H1 (cell line): ENCODE measurements at regions of chr1 and their contacts with region 1.

Region 1: GRCh38 chr1:47769295-47769694 is 227.9 kb downstream of the TRABD2B start:
- DNase-seq: no peak
- H3K4me3 ChIP-seq: no peak overlapping the region
- H3K27ac ChIP-seq: no peak overlapping the region
- H3K4me1 ChIP-seq: 0 out of 7 replicates have a peak, but pooled peaks cover 0 to 3% (median 0%) of the 10 kb centered on the region in 4 experiments
- H3K27me3 ChIP-seq: no peaks in the 10 kb centered on the region; a peak in 1 of 7 replicates
- CTCF ChIP-seq: no peak
- EP300 ChIP-seq: no peak
- POLR2A ChIP-seq: no peak
- RAD21 ChIP-seq: no peak

Region 2: DNA sequence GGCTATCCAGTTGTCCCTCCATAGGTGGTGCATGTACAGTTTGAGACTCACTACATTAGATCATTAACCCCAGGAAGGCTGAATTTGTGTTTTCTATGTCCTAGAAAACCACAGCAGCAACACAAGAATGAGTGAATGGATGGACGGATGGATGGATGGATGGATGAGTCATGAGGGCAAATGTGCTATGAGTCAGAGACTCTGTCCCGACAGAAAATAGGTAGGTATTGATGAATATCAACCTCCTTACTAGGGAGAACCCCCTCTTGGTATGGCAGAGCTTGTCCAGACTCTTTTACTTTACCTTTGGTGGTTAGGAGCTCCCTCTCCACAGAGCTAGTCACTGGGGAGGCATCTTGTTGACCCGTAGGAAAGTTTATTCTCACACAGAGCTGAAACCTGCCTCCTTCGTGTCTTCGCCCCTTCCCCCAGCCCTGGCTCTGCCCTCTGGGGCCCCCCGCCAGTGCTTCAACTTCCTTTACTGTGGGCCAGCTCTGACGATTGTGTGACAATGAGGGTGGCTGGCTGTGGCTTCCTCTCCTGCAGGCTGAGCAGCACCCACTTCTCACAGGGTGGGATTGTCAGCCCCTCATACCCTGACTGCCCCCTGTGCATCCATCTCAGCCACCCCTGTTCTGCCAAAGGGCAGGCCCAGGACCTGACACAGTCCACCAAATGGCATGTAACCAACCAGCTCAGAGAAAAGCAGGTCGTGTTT is 186.2 kb before region 1 on chr1:
- CTCF ChIA-PET with region 1: no interaction called
- POLR2A ChIA-PET with region 1: no interaction called
- DNase-seq: peak in 1 of 2 experiments; percentile 41
- H3K4me3 ChIP-seq: no peak overlapping the region
- H3K27ac ChIP-seq: no peak overlapping the region
- H3K4me1 ChIP-seq: peaks cover 0 to 11% (median 4%) of the 10 kb centered on the region in 4 experiments; a peak in 5 of 7 replicates
- H3K27me3 ChIP-seq: no peaks in the 10 kb centered on the region; a peak in 2 of 7 replicates
- CTCF ChIP-seq: no peak
- EP300 ChIP-seq: no peak
- POLR2A ChIP-seq: no peak
- RAD21 ChIP-seq: no peak

Region 3: GRCh38 chr1:47693115-47693514 is 76.2 kb before region 1 on chr1:
- CTCF ChIA-PET with region 1: no interaction called
- POLR2A ChIA-PET with region 1: no interaction called
- DNase-seq: no peak
- H3K4me3 ChIP-seq: no peak overlapping the region
- H3K27ac ChIP-seq: no peak overlapping the region
- H3K4me1 ChIP-seq: peaks cover 0 to 10% (median 1%) of the 10 kb centered on the region in 4 experiments; a peak in 4 of 7 replicates
- H3K27me3 ChIP-seq: peaks cover 0 to 2% (median 0%) of the 10 kb centered on the region in 4 experiments; a peak in 2 of 7 replicates
- CTCF ChIP-seq: no peak
- EP300 ChIP-seq: no peak
- POLR2A ChIP-seq: no peak
- RAD21 ChIP-seq: no peak

Region 4: GRCh38 chr1:47755101-47755990 is 13.9 kb before region 1 on chr1:
- CTCF ChIA-PET with region 1: interaction called, 68 read pairs
- POLR2A ChIA-PET with region 1: no interaction called
- DNase-seq: peak; percentile 41 to 93
- H3K4me3 ChIP-seq: no peak overlapping the region
- H3K27ac ChIP-seq: no peak overlapping the region
- H3K4me1 ChIP-seq: no peaks in the 10 kb centered on the region; a peak in 1 of 7 replicates
- H3K27me3 ChIP-seq: peaks cover 0 to 2% (median 0%) of the 10 kb centered on the region in 4 experiments; a peak in 1 of 7 replicates
- CTCF ChIP-seq: peak; percentile 75 to 97 (median 95)
- EP300 ChIP-seq: no peak
- POLR2A ChIP-seq: no peak
- RAD21 ChIP-seq: peak; percentile 51 to 64

Region 5: GRCh38 chr1:47809301-47810084 is 40.2 kb after region 1 on chr1:
- CTCF ChIA-PET with region 1: no interaction called
- POLR2A ChIA-PET with region 1: no interaction called
- DNase-seq: no peak
- H3K4me3 ChIP-seq: no peak overlapping the region
- H3K27ac ChIP-seq: no peak overlapping the region
- H3K4me1 ChIP-seq: peaks cover 0 to 4% (median 1%) of the 10 kb centered on the region in 4 experiments; a peak in 3 of 7 replicates
- H3K27me3 ChIP-seq: no peaks in the 10 kb centered on the region
- CTCF ChIP-seq: no peak
- EP300 ChIP-seq: no peak
- POLR2A ChIP-seq: no peak
- RAD21 ChIP-seq: no peak